Activated CD4-positive, alpha-beta memory T cell treated with anti-CD3 and anti-CD28 coated beads, Interleukin-2, amount 10 ng/mL, durations not matched to agents 7 days and 5 days (primary cell): ENCODE measurements at regions of chrX and their contacts with region 1.

Region 1: GRCh38 chrX:3811331-3812311 is 98.2 kb upstream of the PRKX start:
- DNase-seq: peak; percentile 60
- H3K4me3 Mint-ChIP-seq: peak overlapping the region; percentile 18
- H3K27ac Mint-ChIP-seq: peak overlapping the region; percentile 56
- H3K4me1 Mint-ChIP-seq: peaks cover 27% of the 10 kb centered on the region
- H3K27me3 Mint-ChIP-seq: peaks cover 32% of the 10 kb centered on the region

Region 2: DNA sequence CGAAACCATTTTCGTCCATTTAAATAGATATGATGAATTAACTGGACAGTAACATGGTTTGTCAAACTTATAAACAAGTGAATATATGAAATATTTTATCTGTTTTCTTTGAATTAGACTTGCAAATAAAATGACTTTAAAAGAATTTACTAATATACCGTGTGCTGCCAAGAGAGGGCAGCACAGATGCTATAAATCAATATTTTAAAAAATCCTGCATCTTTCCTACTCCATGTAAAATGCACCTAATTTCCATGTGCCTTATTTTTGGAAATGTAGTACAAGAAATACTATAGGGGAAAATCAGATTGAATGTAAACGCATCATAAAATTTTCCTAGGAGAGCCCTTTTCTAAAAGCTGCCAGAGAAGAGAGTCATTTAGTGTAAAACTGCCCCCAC is 160.3 kb before region 1 on chrX:
- CTCF ChIA-PET with region 1: interaction called, 15 read pairs
- POLR2A ChIA-PET with region 1: interaction called, 5 read pairs
- DNase-seq: no peak
- H3K4me3 Mint-ChIP-seq: no peak overlapping the region
- H3K27ac Mint-ChIP-seq: no peak overlapping the region
- H3K4me1 Mint-ChIP-seq: no peaks in the 10 kb centered on the region
- H3K27me3 Mint-ChIP-seq: no peaks in the 10 kb centered on the region